CD4-positive, alpha-beta T cell (primary cell): ENCODE measurements at regions of chr2 and their contacts with region 1.

Region 1: GRCh38 chr2:27663463-27664249 is at the starts of genes SLC4A1AP and SUPT7L:
- DNase-seq: peak; percentile 60 to 89 (median 66)
- ATAC-seq: peak; percentile 79
- H3K4me3 ChIP-seq: peak within 1 kb of the TSS; percentile 91
- H3K4me3 Mint-ChIP-seq: peak within 1 kb of the TSS; percentile 99
- H3K27ac ChIP-seq: peak within 1 kb of the TSS; percentile 90 to 96
- H3K27ac Mint-ChIP-seq: peak within 1 kb of the TSS; percentile 93
- H3K4me1 ChIP-seq: peaks cover 26% of the 10 kb centered on the region
- H3K4me1 Mint-ChIP-seq: peaks cover 59% of the 10 kb centered on the region
- H3K27me3 ChIP-seq: no peaks in the 10 kb centered on the region
- H3K27me3 Mint-ChIP-seq: no peaks in the 10 kb centered on the region
- CTCF ChIP-seq: no peak
- total RNA-seq, gene SLC4A1AP: 14.2 to 15.3 TPM
- total RNA-seq, gene SUPT7L: 48.5 to 52.2 TPM

Region 2: DNA sequence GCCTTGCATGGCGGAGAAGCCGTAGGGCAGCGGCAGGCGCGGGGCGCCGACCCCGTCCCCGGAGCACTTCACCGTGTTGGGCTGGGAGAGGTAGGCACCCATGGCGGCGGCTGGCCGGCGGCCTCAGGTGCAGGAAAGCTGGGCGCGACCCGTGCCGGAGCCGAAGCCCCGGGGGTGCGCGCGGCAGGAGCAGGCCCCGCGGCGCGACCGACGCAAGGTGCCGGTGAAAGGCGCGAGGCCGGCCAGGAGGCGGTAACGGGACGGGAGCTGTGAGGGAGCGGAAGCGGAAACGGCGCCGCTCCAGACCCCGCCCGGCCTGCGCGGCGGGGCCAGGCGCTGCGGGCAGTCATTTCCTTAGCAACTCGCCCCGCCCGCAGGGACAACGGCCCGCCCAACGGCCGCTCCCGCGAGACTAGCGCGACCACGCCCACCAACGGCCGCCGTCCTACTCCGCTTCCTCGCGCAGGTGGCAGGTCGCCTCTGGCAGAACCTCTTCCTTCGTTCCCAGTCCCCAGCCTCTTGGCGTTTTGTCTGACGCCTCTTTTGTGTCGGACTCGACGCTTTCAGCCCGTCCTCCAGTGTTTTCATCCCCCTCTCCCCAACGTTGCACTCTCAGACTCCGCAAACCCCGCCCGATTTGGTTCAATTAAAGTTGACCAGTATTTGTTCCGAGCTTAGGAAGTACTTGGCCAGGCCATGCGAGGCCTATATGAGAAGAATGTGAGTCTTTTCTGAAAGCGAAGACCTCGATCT is 254.2 kb before region 1 on chr2 and contains the start of gene PPM1G:
- CTCF ChIA-PET with region 1: no interaction called
- POLR2A ChIA-PET with region 1: interaction called, 5 read pairs
- intact Hi-C with region 1: loop called in 1 of 2 experiments (anchors 1 kb)
- DNase-seq: peak; percentile 92 to 98 (median 96)
- ATAC-seq: peak; percentile 95
- H3K4me3 ChIP-seq: peak within 1 kb of the TSS; percentile 82
- H3K4me3 Mint-ChIP-seq: peak within 1 kb of the TSS; percentile 90
- H3K27ac ChIP-seq: peak within 1 kb of the TSS; percentile 85 to 90
- H3K27ac Mint-ChIP-seq: peak within 1 kb of the TSS; percentile 82
- H3K4me1 ChIP-seq: peaks cover 33% of the 10 kb centered on the region
- H3K4me1 Mint-ChIP-seq: peaks cover 41% of the 10 kb centered on the region
- H3K27me3 ChIP-seq: no peaks in the 10 kb centered on the region
- H3K27me3 Mint-ChIP-seq: no peaks in the 10 kb centered on the region
- CTCF ChIP-seq: no peak
- total RNA-seq, gene PPM1G: 30.4 to 31.2 TPM

Region 3: DNA sequence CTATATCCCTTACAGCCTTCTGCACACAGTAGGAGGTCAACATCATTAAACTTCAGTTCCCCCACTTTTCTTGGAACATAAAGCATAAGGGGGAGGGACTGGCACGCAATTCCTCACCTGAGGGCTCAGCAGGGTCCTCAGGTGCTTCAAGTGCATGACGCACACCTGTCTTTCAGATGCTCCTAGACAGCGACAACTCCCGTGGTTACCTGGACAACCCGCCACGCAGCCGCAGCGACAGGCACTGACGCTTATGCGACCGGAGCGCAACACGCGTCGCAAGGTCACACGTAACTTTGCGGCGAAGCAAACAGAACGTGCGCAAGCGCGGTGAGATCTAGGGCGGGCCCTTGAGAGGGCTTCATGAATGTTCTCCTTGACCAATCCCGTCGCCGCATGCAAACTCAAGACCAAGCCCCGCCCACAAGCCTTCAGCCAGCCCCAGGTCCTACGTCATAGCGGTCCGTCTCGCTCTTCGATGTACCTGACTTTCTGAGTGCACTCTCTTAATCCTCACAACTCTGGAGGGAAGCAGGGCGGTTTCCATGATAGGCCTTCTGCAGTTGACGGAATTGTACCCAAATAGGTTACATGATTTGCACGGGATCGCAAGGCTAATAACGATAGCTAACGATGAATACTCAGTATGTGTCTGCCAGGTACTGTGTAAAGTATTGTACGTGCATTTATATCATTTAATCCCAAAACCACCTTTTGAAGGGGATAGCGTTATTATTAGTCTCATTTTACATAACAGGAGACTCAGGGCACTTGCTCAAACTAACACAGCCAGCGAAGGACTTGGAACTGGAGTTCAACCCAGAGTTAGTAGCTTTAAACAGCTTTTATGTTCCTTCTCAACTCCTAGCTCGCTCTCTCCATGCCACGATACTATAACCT is 173.9 kb before region 1 on chr2 and contains the start of gene IFT172:
- CTCF ChIA-PET with region 1: no interaction called
- POLR2A ChIA-PET with region 1: interaction called, 5 read pairs
- intact Hi-C with region 1: loop called in 1 of 2 experiments (anchors 10 kb)
- DNase-seq: peak; percentile 97 to 100 (median 99)
- ATAC-seq: peak; percentile 85
- H3K4me3 ChIP-seq: peak within 1 kb of the TSS; percentile 61
- H3K4me3 Mint-ChIP-seq: peak within 1 kb of the TSS; percentile 80
- H3K27ac ChIP-seq: peak within 1 kb of the TSS; percentile 55 to 91
- H3K27ac Mint-ChIP-seq: peak within 1 kb of the TSS; percentile 93
- H3K4me1 ChIP-seq: peaks cover 20% of the 10 kb centered on the region
- H3K4me1 Mint-ChIP-seq: peaks cover 18% of the 10 kb centered on the region
- H3K27me3 ChIP-seq: peaks cover 11 to 13% of the 10 kb centered on the region in 2 experiments
- H3K27me3 Mint-ChIP-seq: peaks cover 12% of the 10 kb centered on the region
- CTCF ChIP-seq: no peak
- total RNA-seq, gene IFT172: 13.3 to 14.4 TPM

Region 4: DNA sequence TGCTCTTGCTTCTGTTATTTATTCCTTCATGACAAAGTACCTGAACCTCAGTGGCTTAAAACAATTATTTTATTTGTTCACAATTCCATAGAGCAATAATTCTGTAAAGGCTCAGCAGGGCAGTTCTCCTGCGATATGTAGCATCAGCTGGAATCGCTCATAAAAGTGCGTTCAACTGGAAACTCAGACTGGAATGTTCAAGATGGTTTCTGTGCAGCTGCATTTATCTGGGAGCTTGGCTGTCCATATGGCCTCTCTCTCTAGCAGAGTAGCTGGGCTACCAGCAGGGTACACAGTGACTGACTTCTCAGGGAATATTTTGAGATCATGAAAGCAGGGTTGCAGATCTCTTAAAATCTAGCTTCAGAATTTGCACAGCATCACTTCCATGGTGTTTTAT is 48.3 kb before region 1 on chr2:
- CTCF ChIA-PET with region 1: no interaction called
- POLR2A ChIA-PET with region 1: no interaction called
- intact Hi-C with region 1: no loop called
- DNase-seq: no peak
- ATAC-seq: no peak
- H3K4me3 ChIP-seq: no peak overlapping the region
- H3K4me3 Mint-ChIP-seq: no peak overlapping the region
- H3K27ac ChIP-seq: no peak overlapping the region
- H3K27ac Mint-ChIP-seq: no peak overlapping the region
- H3K4me1 ChIP-seq: no peaks in the 10 kb centered on the region
- H3K4me1 Mint-ChIP-seq: no peaks in the 10 kb centered on the region
- H3K27me3 ChIP-seq: no peaks in the 10 kb centered on the region
- H3K27me3 Mint-ChIP-seq: no peaks in the 10 kb centered on the region
- CTCF ChIP-seq: no peak

Region 5: DNA sequence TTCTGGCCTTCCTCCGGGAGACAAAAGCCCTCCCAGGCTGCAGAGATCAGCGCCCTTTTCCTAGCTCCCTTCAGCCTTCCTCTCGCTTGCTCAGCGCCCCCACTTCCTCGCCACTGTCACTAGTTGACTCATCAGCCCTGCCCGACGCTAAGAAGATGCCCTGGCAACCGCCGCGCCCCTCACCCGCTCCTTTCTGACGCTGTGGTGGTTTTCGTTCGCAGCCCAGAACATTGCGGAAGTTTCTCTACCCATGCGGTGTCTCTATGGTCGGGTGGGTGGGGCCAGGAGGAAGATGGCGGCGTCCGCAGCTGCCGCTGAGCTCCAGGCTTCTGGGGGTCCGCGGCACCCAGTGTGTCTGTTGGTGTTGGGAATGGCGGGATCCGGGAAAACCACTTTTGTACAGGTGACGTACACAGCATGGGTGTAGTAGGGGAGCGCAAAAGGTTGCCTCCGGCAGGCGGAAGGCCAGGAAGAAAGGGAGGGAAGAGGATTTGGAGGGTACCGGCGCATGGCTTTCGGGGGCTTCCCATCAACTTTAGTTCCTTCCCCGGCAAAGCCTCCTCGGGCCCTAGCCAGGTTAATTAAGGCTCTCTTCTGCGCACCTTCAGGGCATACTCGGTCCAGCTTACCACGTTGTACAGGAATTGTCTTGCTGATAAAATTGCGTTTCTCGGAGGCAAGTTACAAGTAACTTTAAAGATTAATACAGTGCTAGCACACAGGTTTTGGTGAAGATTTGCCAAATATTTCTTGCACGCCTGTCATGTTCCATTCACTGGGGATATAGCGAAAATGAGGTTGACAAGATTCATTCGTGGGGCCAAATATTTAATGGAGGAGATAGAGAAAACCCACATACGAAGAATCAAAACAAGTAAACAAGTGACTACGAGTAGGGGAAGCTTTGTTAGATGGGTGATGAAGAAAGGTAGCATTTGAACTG is 34.6 kb before region 1 on chr2 and contains the starts of genes CCDC121 and GPN1:
- CTCF ChIA-PET with region 1: interaction called, 6 read pairs
- POLR2A ChIA-PET with region 1: interaction called, 20 read pairs
- intact Hi-C with region 1: loop called in 1 of 2 experiments (anchors 2 kb)
- DNase-seq: peak; percentile 89 to 97 (median 94)
- ATAC-seq: peak; percentile 99
- H3K4me3 ChIP-seq: peak within 1 kb of the TSS; percentile 86
- H3K4me3 Mint-ChIP-seq: no peak within 1 kb of the TSS
- H3K27ac ChIP-seq: peak within 1 kb of the TSS; percentile 72 to 78
- H3K27ac Mint-ChIP-seq: no peak within 1 kb of the TSS
- H3K4me1 ChIP-seq: peaks cover 21% of the 10 kb centered on the region
- H3K4me1 Mint-ChIP-seq: peaks cover 20% of the 10 kb centered on the region
- H3K27me3 ChIP-seq: no peaks in the 10 kb centered on the region
- H3K27me3 Mint-ChIP-seq: no peaks in the 10 kb centered on the region
- CTCF ChIP-seq: no peak
- total RNA-seq, gene CCDC121: 0.47 to 0.91 TPM
- total RNA-seq, gene GPN1: 24.6 to 28.1 TPM

Region 6: GRCh38 chr2:27771548-27772335 is 108.1 kb after region 1 on chr2 and contains the start of gene MRPL33:
- CTCF ChIA-PET with region 1: no interaction called
- POLR2A ChIA-PET with region 1: interaction called, 5 read pairs
- intact Hi-C with region 1: loop called in 1 of 2 experiments (anchors 5 kb)
- DNase-seq: peak; percentile 85 to 95 (median 89)
- ATAC-seq: peak; percentile 89
- H3K4me3 ChIP-seq: peak within 1 kb of the TSS; percentile 73
- H3K4me3 Mint-ChIP-seq: peak within 1 kb of the TSS; percentile 100
- H3K27ac ChIP-seq: peak within 1 kb of the TSS; percentile 74 to 91
- H3K27ac Mint-ChIP-seq: peak within 1 kb of the TSS; percentile 100
- H3K4me1 ChIP-seq: peaks cover 15% of the 10 kb centered on the region
- H3K4me1 Mint-ChIP-seq: peaks cover 59% of the 10 kb centered on the region
- H3K27me3 ChIP-seq: no peaks in the 10 kb centered on the region
- H3K27me3 Mint-ChIP-seq: no peaks in the 10 kb centered on the region
- CTCF ChIP-seq: no peak
- total RNA-seq, gene MRPL33: 33.1 to 37.2 TPM